Mammary epithelial cell (primary cell): ENCODE measurements at regions of chr12 and their contacts with region 1.

Region 1: DNA sequence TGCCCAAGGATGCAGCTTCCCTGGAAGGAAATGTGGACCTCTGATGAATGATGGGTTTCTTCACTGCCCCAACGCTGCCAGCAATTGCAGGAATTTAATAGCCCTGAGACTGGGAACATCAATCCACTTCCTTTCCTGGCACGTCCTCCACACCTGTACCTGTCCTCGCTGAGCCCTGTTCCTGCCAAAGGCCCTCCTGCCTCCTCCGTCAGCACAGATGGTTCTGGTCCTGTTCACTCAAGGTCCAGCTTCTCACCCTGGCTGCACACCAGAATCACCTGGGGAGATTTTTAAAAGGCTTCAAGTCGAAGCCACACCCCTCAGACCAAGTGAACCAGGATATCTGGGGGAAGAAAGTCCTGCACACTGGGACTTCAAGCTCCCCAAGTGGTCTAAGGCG is 38.4 kb upstream of the TMEM132C start:
- DNase-seq: no peak
- H3K4me3 ChIP-seq: no peak overlapping the region
- H3K27ac ChIP-seq: no peak overlapping the region
- H3K4me1 ChIP-seq: no peaks in the 10 kb centered on the region
- H3K27me3 ChIP-seq: no peaks in the 10 kb centered on the region
- CTCF ChIP-seq: no peak

Region 2: GRCh38 chr12:128150961-128151360 is 77.6 kb before region 1 on chr12:
- CTCF ChIA-PET with region 1: no interaction called
- dilution Hi-C with region 1: loop called (anchors 5 kb)
- in situ Hi-C with region 1: no loop called
- intact Hi-C with region 1: no loop called
- DNase-seq: no peak
- H3K4me3 ChIP-seq: no peak overlapping the region
- H3K27ac ChIP-seq: no peak overlapping the region
- H3K4me1 ChIP-seq: no peaks in the 10 kb centered on the region
- H3K27me3 ChIP-seq: no peaks in the 10 kb centered on the region
- CTCF ChIP-seq: no peak

Region 3: GRCh38 chr12:128178966-128179365 is 49.6 kb before region 1 on chr12:
- CTCF ChIA-PET with region 1: no interaction called
- dilution Hi-C with region 1: no loop called
- in situ Hi-C with region 1: no loop called
- intact Hi-C with region 1: no loop called
- DNase-seq: no peak
- H3K4me3 ChIP-seq: no peak overlapping the region
- H3K27ac ChIP-seq: no peak overlapping the region
- H3K4me1 ChIP-seq: no peaks in the 10 kb centered on the region
- H3K27me3 ChIP-seq: no peaks in the 10 kb centered on the region
- CTCF ChIP-seq: no peak